ENCODE measurements at regions of chr5 and their contacts with region 1.

Region 1: DNA sequence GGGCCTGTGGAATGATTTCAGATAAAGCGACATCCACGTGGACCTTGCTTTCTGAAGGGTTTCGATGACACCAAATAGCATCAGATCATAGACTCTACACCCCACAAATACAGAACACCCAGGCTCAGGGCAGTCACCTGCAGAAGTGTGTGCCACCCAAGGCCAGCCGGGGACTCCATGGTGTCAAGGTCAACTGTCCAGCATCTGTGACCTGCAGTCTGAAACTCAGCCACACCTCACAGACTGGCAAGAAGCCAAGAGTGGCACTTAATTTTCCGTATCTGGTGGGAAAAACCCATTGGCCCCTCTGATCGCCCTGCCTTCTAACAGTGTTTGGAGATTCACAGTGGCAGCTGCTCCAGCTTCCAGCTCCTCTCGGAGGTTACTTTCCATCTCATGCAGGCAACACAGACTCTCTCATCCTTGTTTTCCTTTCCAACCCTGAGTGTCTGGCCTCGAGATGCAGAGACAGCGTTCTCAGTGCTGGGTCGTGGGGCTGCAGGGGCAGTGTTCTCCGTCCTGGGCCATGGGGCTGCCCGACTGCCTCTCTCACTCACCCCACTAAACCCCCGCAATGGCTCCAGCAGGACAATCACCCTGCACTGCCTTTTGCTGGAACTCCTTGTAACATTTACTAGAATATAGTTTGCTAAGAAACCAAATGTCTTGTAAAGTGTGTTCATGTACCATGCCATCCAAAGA is 221.9 kb downstream of the IRX2 start:
- DNase-seq: no peak
- ATAC-seq: no peak
- H3K4me3 ChIP-seq: no peak overlapping the region
- H3K27ac ChIP-seq: no peak overlapping the region
- H3K4me1 ChIP-seq: no peaks in the 10 kb centered on the region
- H3K27me3 ChIP-seq: no peaks in the 10 kb centered on the region
- CTCF ChIP-seq: no peak

Region 2: DNA sequence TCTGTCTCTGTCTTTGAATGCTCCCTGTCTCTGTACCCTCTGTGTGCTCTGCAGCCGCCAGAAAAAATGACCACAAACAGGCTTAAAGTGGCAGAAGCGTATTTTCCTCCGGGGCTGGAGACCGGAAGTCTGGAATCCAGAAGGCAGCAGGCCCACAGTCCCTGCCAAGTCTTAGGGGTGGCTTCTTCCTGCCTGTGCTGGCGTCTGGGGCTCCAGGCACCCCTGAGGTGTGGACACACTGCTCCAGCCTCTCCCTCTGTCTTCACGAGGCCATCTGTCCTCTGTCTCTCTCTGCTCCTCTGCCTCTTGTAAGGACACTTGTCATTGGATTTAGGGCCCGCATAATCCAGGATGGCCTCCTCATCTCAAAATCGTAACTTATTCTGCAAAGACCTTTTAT is 348.4 kb before region 1 on chr5:
- intact Hi-C with region 1: no loop called
- DNase-seq: no peak
- ATAC-seq: no peak
- H3K4me3 ChIP-seq: no peak overlapping the region
- H3K27ac ChIP-seq: no peak overlapping the region
- H3K4me1 ChIP-seq: no peaks in the 10 kb centered on the region
- H3K27me3 ChIP-seq: peaks cover 3% of the 10 kb centered on the region
- CTCF ChIP-seq: no peak

Region 3: DNA sequence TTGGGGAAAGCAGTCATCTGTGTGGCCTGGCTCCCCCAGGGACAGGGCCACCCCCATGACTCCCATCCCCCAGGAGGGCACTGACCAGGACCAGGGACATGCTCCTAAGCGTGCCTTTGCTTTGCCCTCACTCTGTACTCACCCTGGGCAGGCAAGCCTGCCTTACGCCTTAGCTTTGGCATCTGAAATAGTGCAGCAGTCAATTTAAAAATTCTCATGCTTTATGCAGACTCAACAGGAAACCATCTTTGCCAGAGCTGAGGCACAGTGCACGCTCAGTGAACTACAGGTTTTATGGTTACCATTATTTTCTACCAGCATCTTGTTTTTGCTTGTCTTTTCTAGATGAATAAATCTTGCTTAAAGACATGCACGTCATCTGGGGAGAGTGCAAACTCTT is 101.6 kb before region 1 on chr5:
- intact Hi-C with region 1: loop called (anchors 5 kb)
- DNase-seq: no peak
- ATAC-seq: no peak
- H3K4me3 ChIP-seq: no peak overlapping the region
- H3K27ac ChIP-seq: no peak overlapping the region
- H3K4me1 ChIP-seq: no peaks in the 10 kb centered on the region
- H3K27me3 ChIP-seq: no peaks in the 10 kb centered on the region
- CTCF ChIP-seq: no peak